ENCODE measurements at regions of chr9 and their contacts with region 1.

Region 1: GRCh38 chr9:34500623-34501267 is 22.0 kb downstream of the ENHO start:
- DNase-seq: peak; percentile 29
- ATAC-seq: peak; percentile 86
- H3K4me3 ChIP-seq: no peak overlapping the region
- H3K27ac ChIP-seq: no peak overlapping the region
- H3K4me1 ChIP-seq: peaks cover 7 to 10% of the 10 kb centered on the region in 2 experiments; a peak in 2 of 4 replicates
- H3K27me3 ChIP-seq: no peaks in the 10 kb centered on the region
- CTCF ChIP-seq: peak; percentile 87 to 99 (median 99)
- POLR2A ChIP-seq: no peak
- RAD21 ChIP-seq: peak; percentile 88

Region 2: GRCh38 chr9:34332076-34332964 is 168.4 kb before region 1 on chr9:
- CTCF ChIA-PET with region 1: no interaction called
- POLR2A ChIA-PET with region 1: no interaction called
- RAD21 ChIA-PET with region 1: no interaction called
- intact Hi-C with region 1: loop called (anchors 1 kb)
- DNase-seq: peak; percentile 28
- ATAC-seq: no peak
- H3K4me3 ChIP-seq: no peak overlapping the region
- H3K27ac ChIP-seq: no peak overlapping the region
- H3K4me1 ChIP-seq: peaks cover 8 to 23% of the 10 kb centered on the region in 2 experiments; a peak in 3 of 4 replicates
- H3K27me3 ChIP-seq: no peaks in the 10 kb centered on the region
- CTCF ChIP-seq: peak; percentile 40 to 71 (median 58)
- POLR2A ChIP-seq: no peak
- RAD21 ChIP-seq: peak; percentile 81

Region 3: DNA sequence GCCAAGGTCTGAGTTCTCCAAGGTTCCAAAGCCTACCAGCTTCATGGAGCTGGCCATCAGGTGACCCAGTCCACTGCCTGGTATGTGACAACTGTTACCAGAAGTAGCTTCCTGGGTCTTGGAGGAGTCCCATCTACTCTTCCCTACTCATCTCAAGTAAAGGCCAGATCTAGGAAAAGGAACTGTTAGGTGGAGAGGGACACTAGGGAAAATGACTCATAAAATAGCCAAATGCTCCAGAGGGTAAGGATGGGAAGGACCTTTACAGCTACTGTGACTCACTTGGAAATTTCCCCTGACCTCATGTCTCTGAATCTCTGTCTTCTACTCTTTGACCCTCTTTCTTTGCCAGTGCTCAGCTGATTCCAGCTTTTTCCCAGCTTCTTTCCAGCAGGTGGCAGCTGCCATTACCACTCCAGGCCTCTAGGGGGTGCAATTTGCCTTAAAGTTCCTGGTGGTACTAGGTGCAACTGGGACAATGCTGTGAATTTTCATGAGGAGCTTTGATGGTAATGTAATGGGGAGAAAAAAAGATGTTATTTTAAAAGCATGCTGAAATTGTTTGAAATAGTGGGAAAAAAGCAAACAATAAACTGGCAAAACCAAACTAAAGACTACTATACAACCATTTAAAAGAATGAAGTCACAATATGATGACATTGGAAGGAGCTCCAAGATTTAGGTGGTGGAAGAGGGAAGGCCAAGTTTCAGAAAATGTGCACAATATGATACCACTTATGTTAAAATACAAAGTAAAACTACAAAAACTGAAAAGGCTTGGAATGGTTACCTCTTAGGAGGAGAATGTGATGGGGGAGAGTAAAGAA is 97.0 kb before region 1 on chr9:
- CTCF ChIA-PET with region 1: interaction called, 17 read pairs
- POLR2A ChIA-PET with region 1: no interaction called
- RAD21 ChIA-PET with region 1: interaction called in 1 of 2 experiments, 3 read pairs
- intact Hi-C with region 1: loop called (anchors 1 kb)
- DNase-seq: peak; percentile 39
- ATAC-seq: peak; percentile 83
- H3K4me3 ChIP-seq: no peak overlapping the region
- H3K27ac ChIP-seq: no peak overlapping the region
- H3K4me1 ChIP-seq: 0 out of 4 replicates have a peak, but pooled peaks cover 0 to 4% of the 10 kb centered on the region in 2 experiments
- H3K27me3 ChIP-seq: no peaks in the 10 kb centered on the region
- CTCF ChIP-seq: peak; percentile 95 to 99 (median 99)
- POLR2A ChIP-seq: no peak
- RAD21 ChIP-seq: peak; percentile 81

Region 4: DNA sequence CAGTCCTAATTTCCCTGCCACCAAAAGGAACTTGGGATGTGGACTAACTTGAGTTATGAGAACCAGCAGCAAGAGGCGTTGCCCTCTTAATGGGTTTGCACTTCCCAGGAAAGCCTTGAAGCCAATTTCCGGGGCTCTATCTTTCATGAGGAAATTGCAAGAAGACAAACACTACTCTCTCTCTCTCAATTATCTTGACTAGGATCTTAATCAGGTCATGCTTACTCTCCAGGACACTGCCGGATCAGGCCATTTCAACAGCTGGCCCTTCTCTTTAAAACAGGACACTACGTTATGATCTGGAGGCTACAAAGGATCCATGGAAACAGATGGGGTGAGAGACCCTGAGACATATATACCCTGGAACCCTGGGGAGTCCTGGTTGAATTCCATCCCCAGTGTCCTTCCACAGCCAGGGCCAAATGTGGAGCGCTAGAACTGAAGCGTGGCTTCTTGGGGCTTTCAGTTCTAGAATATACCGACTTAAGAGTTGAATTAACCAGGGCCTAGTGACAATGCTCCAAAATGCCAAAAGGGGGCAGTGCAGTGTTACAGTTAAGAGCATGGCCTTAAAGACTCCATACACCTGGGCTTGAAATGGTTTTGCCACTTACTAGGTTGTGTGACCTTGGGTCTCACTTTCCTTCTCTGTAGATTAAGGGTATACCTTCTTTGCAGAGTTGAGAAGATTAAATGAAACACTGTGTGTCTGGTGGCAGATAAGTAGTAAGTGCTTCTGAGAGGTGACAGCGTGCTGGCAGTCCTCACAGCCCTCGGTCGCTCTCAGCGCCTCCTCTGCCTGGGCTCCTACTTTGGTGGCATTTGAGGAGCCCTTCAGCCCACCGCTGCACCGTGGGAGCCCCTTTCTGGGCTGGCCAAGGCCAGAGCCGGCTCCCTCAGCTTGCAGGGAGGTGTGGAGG is 63.5 kb before region 1 on chr9:
- CTCF ChIA-PET with region 1: interaction called, 3 read pairs
- POLR2A ChIA-PET with region 1: no interaction called
- RAD21 ChIA-PET with region 1: no interaction called
- intact Hi-C with region 1: loop called (anchors 1 kb)
- DNase-seq: peak; percentile 67
- ATAC-seq: peak; percentile 96
- H3K4me3 ChIP-seq: no peak overlapping the region
- H3K27ac ChIP-seq: no peak overlapping the region
- H3K4me1 ChIP-seq: no peaks in the 10 kb centered on the region; a peak in 1 of 4 replicates
- H3K27me3 ChIP-seq: no peaks in the 10 kb centered on the region
- CTCF ChIP-seq: peak; percentile 75 to 90 (median 82)
- POLR2A ChIP-seq: no peak
- RAD21 ChIP-seq: peak; percentile 93

Region 5: DNA sequence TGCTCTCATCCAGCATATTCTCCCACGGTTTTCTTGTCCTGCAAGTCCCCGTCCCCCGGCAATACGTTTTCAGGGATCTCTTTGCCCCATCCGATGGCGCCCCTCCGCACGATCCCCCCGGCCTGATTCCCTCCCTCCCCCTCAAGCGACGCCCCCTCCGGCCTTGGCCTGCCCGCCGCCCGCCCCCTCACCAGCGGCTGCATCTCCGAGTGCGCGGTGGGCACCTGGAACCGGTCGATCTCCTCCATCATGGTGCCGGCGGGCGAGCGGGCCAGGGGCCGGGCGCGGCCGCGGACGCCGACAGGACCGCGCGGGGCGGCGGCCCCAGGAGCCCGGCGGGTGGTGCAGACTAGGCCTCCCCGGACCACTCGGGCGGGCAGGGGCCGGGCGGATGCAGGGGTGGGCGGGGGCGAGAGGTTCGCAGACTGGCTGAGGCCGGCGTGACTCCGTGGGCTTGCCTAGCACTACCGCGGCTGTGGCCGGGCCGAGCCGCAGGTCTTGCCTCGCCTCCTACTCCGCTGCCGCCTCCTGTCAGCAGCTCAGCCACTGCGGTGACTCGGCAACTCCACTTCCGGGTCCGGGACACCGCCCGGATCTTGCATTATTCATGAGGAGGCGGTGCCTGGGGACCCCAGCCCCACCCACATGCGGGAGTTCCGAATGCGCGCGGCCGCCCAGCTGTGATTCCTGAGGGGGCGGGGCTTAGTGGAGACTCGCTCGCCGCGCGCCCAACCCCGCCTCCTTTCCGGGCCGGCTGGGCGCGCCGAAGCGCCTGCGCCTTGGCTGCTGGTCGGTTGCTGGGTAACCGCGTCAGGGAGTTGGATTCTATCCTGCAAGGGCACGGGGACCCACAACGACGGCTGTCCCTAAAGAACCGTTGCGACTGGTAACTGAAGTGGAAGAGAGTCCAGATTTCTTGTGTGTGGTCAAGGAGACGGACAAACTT is 42.5 kb before region 1 on chr9 and contains the starts of genes DNAI1 and FAM219A:
- CTCF ChIA-PET with region 1: no interaction called
- POLR2A ChIA-PET with region 1: no interaction called
- RAD21 ChIA-PET with region 1: no interaction called
- intact Hi-C with region 1: loop called (anchors 5 kb)
- DNase-seq: peak; percentile 95
- ATAC-seq: peak; percentile 95
- H3K4me3 ChIP-seq: peak within 1 kb of the TSS; percentile 78 to 79
- H3K27ac ChIP-seq: peak within 1 kb of the TSS; percentile 4; the same call in 1 of the 2 replicates
- H3K4me1 ChIP-seq: peaks cover 13 to 42% of the 10 kb centered on the region in 2 experiments
- H3K27me3 ChIP-seq: no peaks in the 10 kb centered on the region
- CTCF ChIP-seq: no peak
- POLR2A ChIP-seq: no peak
- RAD21 ChIP-seq: no peak
- total RNA-seq, gene DNAI1: 1.1 TPM
- total RNA-seq, gene FAM219A: 13.4 TPM

Region 6: DNA sequence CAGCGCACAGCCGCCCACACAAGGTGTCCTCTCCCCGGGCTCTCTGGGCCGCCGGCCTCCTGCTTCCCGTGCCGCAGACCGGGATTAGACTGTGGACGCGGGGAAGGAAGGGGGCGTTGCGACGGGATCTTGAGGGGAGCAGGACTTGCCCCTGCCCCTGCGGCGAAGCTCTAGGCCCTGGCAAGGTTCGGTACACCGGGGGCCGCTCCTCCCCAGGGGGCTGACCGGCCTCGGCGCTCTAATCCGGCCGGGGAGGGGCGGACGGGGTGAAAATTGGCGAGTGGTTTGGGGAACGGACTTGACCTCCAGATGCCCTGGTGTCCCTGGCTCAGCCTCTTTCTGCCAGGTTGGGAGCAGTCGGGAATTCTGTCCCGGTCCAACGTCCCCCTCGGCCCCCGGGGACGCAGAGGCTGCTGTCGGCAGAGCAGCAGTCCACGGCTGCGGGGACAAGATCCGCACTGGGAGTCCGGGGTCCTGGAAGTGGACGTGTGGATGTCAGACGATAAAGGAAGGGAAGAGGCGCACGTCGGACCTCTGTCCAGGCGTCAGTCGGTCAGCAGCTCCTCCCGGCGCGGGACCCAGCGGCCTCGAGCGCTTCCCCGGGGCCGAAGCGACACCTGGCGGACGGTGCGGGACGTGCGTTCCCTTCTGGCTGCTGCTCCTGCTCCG is 90.6 kb after region 1 on chr9:
- CTCF ChIA-PET with region 1: no interaction called
- POLR2A ChIA-PET with region 1: no interaction called
- RAD21 ChIA-PET with region 1: no interaction called
- intact Hi-C with region 1: loop called (anchors 5 kb)
- DNase-seq: peak; percentile 33
- ATAC-seq: peak; percentile 98
- H3K4me3 ChIP-seq: no peak overlapping the region
- H3K27ac ChIP-seq: no peak overlapping the region
- H3K4me1 ChIP-seq: peaks cover 0 to 8% of the 10 kb centered on the region in 2 experiments; a peak in 2 of 4 replicates
- H3K27me3 ChIP-seq: peaks cover 7% of the 10 kb centered on the region; the same call in 1 of the 2 replicates
- CTCF ChIP-seq: peak; percentile 81 to 92 (median 90)
- POLR2A ChIP-seq: no peak
- RAD21 ChIP-seq: peak; percentile 93